Sciatic nerve (tissue), 2 donors: ENCODE measurements at regions of chr2 and their contacts with region 1.

Region 1: DNA sequence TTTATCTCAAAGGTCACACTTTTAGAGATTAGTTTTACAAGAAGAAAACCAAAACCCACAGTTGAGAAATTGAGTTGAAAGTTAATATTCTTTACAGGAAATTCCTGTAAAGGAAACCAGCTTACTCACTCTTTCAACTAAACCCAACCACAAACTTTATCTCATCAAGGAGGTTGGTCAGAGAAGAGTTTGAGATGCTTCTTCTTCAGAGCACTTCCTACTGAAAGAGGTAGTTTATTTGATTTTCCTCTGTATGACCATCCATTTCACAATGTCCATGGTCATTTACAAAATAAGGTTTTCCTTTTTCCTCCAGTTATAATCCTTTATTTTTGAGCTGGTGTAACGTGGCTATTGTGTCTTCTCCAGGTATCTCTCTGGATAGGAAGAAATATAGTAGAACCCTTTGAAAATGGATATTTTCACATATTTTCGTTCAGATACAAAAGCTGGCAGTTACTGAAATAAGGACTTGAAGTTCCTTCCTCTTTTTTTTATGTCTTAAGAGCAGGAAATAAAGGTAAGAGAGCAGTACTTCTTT is 4.5 kb upstream of the IL18RAP start:
- DNase-seq: no peak
- ATAC-seq: no peak

Region 2: DNA sequence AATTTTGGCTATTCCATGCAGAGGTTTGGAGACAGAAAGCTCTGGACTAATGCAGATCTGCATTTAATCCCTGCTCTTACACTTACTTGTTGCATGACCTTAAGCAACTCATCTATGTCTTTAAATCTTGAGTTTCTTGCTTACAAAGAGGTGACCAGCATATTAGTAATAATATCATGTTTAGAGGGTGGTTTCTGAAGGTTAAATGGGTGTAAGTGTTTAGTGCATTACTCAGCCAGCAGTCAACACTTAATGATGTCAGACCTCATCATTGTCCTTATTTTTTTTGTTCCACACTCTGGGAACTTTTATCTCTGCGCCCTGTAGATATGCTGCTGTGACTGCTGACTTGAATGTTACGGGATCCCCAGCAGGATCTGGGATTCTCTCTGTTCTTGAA is 105.5 kb before region 1 on chr2:
- intact Hi-C with region 1: no loop called
- DNase-seq: no peak
- ATAC-seq: no peak

Region 3: GRCh38 chr2:103859238-103859637 is 1440.7 kb after region 1 on chr2:
- intact Hi-C with region 1: loop called (anchors 5 kb)
- DNase-seq: no peak
- ATAC-seq: no peak